ENCODE measurements at regions of chr9 and their contacts with region 1.

Region 1: DNA sequence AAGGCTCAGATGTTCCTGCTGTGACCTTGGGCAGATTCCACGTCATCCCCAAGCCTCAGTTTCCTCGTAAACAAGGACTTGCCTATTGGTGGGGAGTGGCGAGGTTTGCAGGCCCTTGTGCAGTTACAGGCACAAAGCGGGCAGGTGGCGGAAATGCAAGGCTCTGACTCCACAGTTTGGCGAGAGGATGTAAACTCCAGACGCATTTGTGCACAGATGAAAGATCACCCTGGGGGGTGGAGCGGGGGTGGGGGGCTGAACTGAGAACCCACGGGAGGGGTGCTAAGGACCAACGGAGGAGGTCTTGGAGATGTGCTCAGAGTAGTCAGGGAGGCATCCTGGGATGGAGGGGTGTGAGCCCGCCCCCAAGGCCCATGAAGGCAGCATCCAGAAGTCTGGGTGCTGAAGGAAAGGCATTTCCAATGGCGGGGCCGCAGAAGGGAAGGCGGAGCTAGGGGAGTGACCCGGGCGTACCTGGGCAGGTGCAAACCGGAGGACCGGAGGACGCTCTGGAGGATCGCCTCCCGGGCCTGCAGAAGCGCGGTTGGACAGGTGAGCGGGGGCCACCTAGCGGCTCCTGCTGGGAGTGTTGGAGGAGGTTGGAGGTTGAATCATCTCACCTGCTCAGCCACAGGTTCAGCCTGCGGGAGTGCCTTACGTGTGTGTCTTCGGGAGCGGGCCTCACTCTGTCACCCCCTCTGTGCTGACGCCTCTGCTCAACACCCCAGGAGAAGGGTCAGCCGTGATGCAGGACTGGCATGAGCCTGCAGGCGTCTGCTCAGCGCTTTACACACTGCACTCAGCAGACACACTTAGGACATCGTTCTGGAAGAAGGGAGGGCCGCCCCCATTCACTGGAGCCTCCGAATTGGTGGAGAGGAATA is 1.9 kb upstream of the FIBCD1 start:
- DNase-seq: peak; percentile 65
- H3K4me3 ChIP-seq: no peak overlapping the region
- H3K27ac ChIP-seq: no peak overlapping the region
- H3K4me1 ChIP-seq: no peaks in the 10 kb centered on the region
- CTCF ChIP-seq: peak; percentile 85

Region 2: DNA sequence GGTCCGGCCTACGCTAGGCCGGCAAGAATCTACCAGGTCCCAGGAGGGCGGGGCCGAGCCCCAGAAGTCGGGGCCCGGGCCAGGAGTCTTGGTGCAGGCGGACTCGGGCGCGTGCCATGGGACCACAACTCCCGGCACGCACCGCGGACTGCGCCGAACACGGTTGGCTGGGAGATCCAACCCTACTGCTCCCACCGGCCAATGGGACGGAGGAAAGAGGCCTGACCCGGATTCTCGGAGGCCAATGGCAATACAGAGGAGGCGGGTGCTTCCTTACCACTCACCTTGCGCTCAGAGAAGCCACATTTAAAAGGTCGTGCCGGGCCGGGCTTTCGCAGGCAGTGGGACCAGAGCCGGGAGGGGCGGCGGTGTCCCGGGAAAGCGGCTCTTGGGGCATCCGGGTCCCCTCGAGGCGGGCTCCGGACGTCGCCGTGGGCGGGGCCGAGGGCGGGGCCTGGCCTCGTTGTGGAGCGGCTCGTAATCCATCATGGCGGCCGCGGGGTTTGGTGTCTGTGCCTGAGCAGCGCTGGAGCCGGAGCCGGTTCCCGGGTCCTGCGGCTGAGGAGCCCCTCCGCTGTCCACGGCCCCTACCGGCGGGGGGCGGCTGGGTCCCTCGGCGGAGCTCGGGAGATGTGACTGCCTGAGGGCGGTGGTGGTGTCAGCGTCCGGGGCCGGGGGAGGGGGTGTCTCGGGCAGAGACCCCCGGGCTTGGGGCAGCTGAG is 228.2 kb before region 1 on chr9:
- CTCF ChIA-PET with region 1: no interaction called
- POLR2A ChIA-PET with region 1: no interaction called
- intact Hi-C with region 1: loop called (anchors 5 kb)
- DNase-seq: peak; percentile 97
- H3K4me3 ChIP-seq: peak overlapping the region; percentile 81
- H3K27ac ChIP-seq: peak overlapping the region; percentile 72
- H3K4me1 ChIP-seq: peaks cover 25% of the 10 kb centered on the region
- CTCF ChIP-seq: no peak

Region 3: GRCh38 chr9:130770679-130771442 is 170.1 kb before region 1 on chr9:
- CTCF ChIA-PET with region 1: no interaction called
- POLR2A ChIA-PET with region 1: interaction called, 5 read pairs
- intact Hi-C with region 1: loop called (anchors 2 kb)
- DNase-seq: peak; percentile 49
- H3K4me3 ChIP-seq: no peak overlapping the region
- H3K27ac ChIP-seq: no peak overlapping the region
- H3K4me1 ChIP-seq: peaks cover 8% of the 10 kb centered on the region
- CTCF ChIP-seq: peak; percentile 80

Region 4: DNA sequence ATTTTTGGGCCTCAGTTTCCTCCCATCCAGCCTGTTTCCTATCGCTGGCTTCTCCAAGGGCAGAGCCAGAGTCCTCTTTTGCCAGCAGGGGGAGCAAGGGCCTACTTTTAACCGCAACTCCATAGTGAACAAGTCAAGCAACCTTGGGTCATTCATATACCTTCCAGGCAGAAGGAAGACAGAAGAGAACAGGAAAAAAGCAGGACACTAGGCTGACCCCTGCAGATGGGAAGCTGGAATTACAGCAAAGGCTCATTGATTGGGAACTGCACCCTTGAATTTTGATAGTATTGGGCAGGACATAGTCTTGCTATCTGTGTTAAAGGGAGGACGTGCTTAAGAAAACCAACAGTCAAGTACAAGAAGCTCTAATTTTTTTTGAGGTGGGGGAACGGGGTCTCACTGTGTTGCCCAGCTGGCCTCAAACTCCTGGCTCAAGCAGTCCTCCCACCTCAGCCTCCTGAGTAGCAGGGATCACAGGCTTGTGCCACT is 74.4 kb before region 1 on chr9:
- CTCF ChIA-PET with region 1: no interaction called
- POLR2A ChIA-PET with region 1: no interaction called
- intact Hi-C with region 1: loop called (anchors 1 kb)
- DNase-seq: peak; percentile 63
- H3K4me3 ChIP-seq: no peak overlapping the region
- H3K27ac ChIP-seq: no peak overlapping the region
- H3K4me1 ChIP-seq: peaks cover 12% of the 10 kb centered on the region
- CTCF ChIP-seq: peak; percentile 94

Region 5: GRCh38 chr9:130884980-130885696 is 55.8 kb before region 1 on chr9:
- CTCF ChIA-PET with region 1: no interaction called
- POLR2A ChIA-PET with region 1: no interaction called
- intact Hi-C with region 1: no loop called
- DNase-seq: no peak
- H3K4me3 ChIP-seq: no peak overlapping the region
- H3K27ac ChIP-seq: no peak overlapping the region
- H3K4me1 ChIP-seq: no peaks in the 10 kb centered on the region
- CTCF ChIP-seq: no peak

Region 6: DNA sequence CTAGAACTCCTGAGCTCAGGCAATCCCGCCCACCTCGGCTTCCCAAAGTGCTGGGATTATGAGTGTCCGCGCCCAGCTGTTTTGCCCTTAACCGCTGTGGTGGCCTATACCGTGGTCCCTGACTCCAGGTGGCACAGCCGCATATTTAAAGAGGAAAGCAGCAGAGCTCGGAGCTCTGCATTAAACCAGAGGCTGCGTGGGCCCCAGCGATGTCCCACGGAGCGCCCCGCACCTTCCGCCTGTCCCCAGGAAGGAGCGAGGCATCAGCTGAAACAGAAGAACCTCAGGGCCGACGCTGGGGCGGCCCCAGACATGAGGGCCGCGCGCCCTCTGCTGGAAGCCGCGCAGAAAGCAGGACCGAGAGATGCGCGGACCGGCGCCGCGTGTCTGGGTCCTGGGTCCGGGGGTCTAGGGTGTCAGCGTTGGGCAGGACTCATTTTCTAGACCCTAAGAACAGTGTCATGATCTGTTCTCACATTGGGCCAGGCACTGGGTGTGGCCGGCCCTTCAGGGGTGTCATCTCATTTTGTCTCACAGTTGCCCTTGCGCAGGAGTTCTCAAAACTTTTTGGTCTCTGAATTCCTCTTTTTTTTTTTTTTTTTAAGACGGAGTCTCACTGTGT is 105.8 kb after region 1 on chr9:
- CTCF ChIA-PET with region 1: no interaction called
- POLR2A ChIA-PET with region 1: no interaction called
- intact Hi-C with region 1: loop called (anchors 2 kb)
- DNase-seq: peak; percentile 76
- H3K4me3 ChIP-seq: no peak overlapping the region
- H3K27ac ChIP-seq: no peak overlapping the region
- H3K4me1 ChIP-seq: peaks cover 15% of the 10 kb centered on the region
- CTCF ChIP-seq: peak; percentile 93